Activated T-helper 2 cell treated with anti-CD3 and anti-CD28 coated beads, Interferon-gamma antibody, Interleukin-2, Interleukin-4, amounts not matched to agents 10 μg/mL and 5 μg/mL and 100 μg/mL, durations not matched to agents 14 hours and 24 hours and 36 hours (primary cell): ENCODE measurements at regions of chr21 and their contacts with region 1.

Region 1: DNA sequence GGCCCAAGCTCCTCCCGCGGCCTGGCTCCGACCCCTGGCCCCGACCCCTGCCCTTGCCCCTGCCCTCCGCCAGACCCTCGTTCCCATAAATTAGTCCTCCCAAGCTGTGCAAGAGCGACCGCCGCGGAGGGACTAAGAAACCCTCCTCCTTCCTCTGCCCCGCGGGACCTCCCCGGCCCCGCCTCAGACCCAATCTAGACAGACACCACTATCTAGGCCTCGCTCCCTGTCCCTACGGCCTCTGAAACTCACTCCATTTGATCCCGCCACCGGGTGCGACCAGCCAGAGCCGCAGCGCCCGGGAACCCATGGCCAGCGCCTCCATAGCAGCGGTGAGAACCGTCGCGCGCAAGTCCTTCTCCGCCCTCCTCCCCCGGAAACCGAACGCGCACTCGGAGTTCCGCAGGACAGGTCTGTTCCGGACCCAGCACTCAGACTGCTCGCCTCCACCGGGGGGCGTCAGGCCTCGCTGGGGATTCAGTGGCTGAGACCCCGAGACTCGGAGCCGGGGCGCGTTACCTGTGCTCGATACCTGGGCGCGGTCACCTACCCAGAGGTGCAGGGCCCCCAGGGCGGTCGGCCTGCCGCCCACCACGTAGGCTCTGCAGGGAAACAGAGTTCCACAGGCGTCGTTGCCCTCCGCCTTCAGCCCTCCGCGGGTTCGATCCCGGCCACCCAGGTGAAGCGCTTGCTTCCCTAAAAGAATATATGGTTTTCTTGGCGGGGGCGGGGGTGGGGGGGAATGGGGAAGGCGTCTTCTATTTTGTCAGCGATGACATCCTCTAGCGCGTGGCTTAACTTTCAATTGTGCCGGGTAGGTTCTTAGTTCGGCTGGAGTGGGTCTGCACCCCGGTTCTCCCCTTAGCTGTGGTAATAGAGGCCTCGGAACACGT is at the start of gene MRPL39:
- DNase-seq: peak; percentile 84
- H3K4me3 Mint-ChIP-seq: peak within 1 kb of the TSS; percentile 100
- H3K27ac Mint-ChIP-seq: peak within 1 kb of the TSS; percentile 98
- H3K4me1 Mint-ChIP-seq: peaks cover 26% of the 10 kb centered on the region
- H3K27me3 Mint-ChIP-seq: no peaks in the 10 kb centered on the region
- total RNA-seq, gene MRPL39: 53.1 and 54.4 TPM in 2 replicates

Region 2: DNA sequence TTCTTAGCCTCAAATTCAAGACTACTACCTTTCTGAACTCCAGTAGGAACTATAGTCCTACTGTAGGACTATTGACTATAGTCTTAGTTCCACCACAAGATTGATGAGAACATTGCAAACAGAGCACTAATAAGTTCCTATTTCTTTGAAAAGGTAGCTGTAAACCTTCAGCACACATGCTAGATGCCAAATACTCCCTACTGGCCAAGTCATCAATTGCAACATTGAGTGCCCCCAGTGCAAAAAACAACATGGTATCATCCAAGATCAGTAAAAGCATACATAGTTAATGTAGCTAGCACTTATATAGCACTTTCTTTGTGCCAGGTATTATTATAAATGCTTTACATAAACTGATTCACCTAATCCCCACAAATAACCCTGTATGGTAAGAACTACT is 99.9 kb before region 1 on chr21:
- intact Hi-C with region 1: no loop called
- DNase-seq: no peak
- H3K4me3 Mint-ChIP-seq: no peak overlapping the region
- H3K27ac Mint-ChIP-seq: peak overlapping the region; percentile 8
- H3K4me1 Mint-ChIP-seq: peaks cover 52% of the 10 kb centered on the region
- H3K27me3 Mint-ChIP-seq: no peaks in the 10 kb centered on the region

Region 3: GRCh38 chr21:25573409-25574206 is 33.8 kb before region 1 on chr21:
- intact Hi-C with region 1: loop called (anchors 2 kb)
- DNase-seq: peak; percentile 38
- H3K4me3 Mint-ChIP-seq: peak overlapping the region; percentile 77
- H3K27ac Mint-ChIP-seq: peak overlapping the region; percentile 93
- H3K4me1 Mint-ChIP-seq: peaks cover 76% of the 10 kb centered on the region
- H3K27me3 Mint-ChIP-seq: no peaks in the 10 kb centered on the region

Region 4: GRCh38 chr21:25708467-25709065 is 101.2 kb after region 1 on chr21:
- intact Hi-C with region 1: loop called (anchors 1 kb)
- DNase-seq: peak; percentile 14
- H3K4me3 Mint-ChIP-seq: no peak overlapping the region
- H3K27ac Mint-ChIP-seq: no peak overlapping the region
- H3K4me1 Mint-ChIP-seq: peaks cover 1% of the 10 kb centered on the region
- H3K27me3 Mint-ChIP-seq: no peaks in the 10 kb centered on the region

Region 5: GRCh38 chr21:25750085-25750484 is 142.7 kb after region 1 on chr21:
- intact Hi-C with region 1: no loop called
- DNase-seq: no peak
- H3K4me3 Mint-ChIP-seq: no peak overlapping the region
- H3K27ac Mint-ChIP-seq: no peak overlapping the region
- H3K4me1 Mint-ChIP-seq: peaks cover 5% of the 10 kb centered on the region
- H3K27me3 Mint-ChIP-seq: no peaks in the 10 kb centered on the region

Region 6: GRCh38 chr21:25801217-25802014 is 194.0 kb after region 1 on chr21:
- intact Hi-C with region 1: loop called (anchors 1 kb)
- DNase-seq: peak; percentile 85
- H3K4me3 Mint-ChIP-seq: no peak overlapping the region
- H3K27ac Mint-ChIP-seq: no peak overlapping the region
- H3K4me1 Mint-ChIP-seq: peaks cover 3% of the 10 kb centered on the region
- H3K27me3 Mint-ChIP-seq: peaks cover 13% of the 10 kb centered on the region

Region 7: DNA sequence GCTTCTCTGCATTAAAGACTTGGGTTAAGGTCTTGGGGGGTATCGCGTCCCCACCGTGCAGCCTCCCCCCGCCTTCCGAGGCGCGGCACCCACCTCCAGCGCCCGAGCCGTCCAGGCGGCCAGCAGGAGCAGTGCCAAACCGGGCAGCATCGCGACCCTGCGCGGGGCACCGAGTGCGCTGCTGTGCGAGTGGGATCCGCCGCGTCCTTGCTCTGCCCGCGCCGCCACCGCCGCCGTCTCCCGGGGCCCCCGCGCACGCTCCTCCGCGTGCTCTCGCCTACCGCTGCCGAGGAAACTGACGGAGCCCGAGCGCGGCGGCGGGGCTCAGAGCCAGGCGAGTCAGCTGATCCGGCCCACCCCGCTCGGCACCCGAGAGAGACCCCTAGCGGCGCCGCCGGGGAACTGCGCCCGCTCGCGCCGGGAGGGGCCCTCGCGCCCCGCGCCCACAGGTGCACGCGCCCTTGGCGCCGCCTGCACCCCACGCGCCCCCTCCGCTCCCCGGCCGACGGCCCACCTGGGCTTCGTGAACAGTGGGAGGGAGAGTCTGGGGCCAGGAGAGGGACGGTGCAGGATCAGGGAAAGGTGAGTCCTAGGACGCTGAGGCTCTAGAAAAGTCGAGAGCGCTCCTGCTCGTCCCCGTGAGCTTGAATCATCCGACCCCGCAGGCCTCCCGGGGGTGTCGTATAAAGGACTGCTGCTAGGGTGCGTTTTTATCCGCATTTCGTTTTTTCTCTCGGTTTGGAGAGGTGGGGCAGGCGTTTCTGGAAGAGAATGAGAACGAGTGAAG is 563.3 kb after region 1 on chr21 and contains the start of gene APP:
- intact Hi-C with region 1: loop called (anchors 2 kb)
- DNase-seq: peak; percentile 86
- H3K4me3 Mint-ChIP-seq: peak within 1 kb of the TSS; percentile 94
- H3K27ac Mint-ChIP-seq: peak within 1 kb of the TSS; percentile 78
- H3K4me1 Mint-ChIP-seq: peaks cover 35% of the 10 kb centered on the region
- H3K27me3 Mint-ChIP-seq: peaks cover 6% of the 10 kb centered on the region
- total RNA-seq, gene APP: 85.7 and 86.5 TPM in 2 replicates